ENCODE measurements at regions of chr20 and their contacts with region 1.

Region 1: GRCh38 chr20:45771182-45771759 is 20.4 kb downstream of the WFDC3 start:
- DNase-seq: peak; percentile 48
- ATAC-seq: peak; percentile 88
- H3K4me3 ChIP-seq: no peak overlapping the region
- H3K27ac ChIP-seq: no peak overlapping the region
- H3K4me1 ChIP-seq: no peaks in the 10 kb centered on the region; the same call in 1 of the 2 replicates
- H3K27me3 ChIP-seq: no peaks in the 10 kb centered on the region
- CTCF ChIP-seq: peak; percentile 83 to 97 (median 92); a peak in 5 of 6 replicates
- EP300 ChIP-seq: no peak
- POLR2A ChIP-seq: no peak
- RAD21 ChIP-seq: peak; percentile 99

Region 2: GRCh38 chr20:45362804-45363610 is 408.3 kb before region 1 on chr20 and contains the start of gene SYS1:
- CTCF ChIA-PET with region 1: interaction called, 16 read pairs
- POLR2A ChIA-PET with region 1: no interaction called
- RAD21 ChIA-PET with region 1: interaction called, 12 read pairs
- SMC1A ChIA-PET with region 1: interaction called, 18 read pairs
- in situ Hi-C with region 1: no loop called
- intact Hi-C with region 1: loop called (anchors 2 kb)
- DNase-seq: peak; percentile 94
- ATAC-seq: peak; percentile 85
- H3K4me3 ChIP-seq: peak within 1 kb of the TSS; percentile 62
- H3K27ac ChIP-seq: peak within 1 kb of the TSS; percentile 92
- H3K4me1 ChIP-seq: peaks cover 39% of the 10 kb centered on the region
- H3K27me3 ChIP-seq: no peaks in the 10 kb centered on the region
- CTCF ChIP-seq: peak; percentile 85 to 99 (median 87); a peak in 5 of 6 replicates
- EP300 ChIP-seq: 0 out of 4 replicates have a peak, but pooled peaks of 1 of the 2 experiments have one; percentile 30
- POLR2A ChIP-seq: peak; percentile 94
- RAD21 ChIP-seq: peak; percentile 91
- polyA plus RNA-seq, gene SYS1: 5.1 to 7.3 TPM

Region 3: GRCh38 chr20:45450097-45450818 is 321.0 kb before region 1 on chr20:
- CTCF ChIA-PET with region 1: interaction called, 47 read pairs
- POLR2A ChIA-PET with region 1: no interaction called
- RAD21 ChIA-PET with region 1: interaction called, 10 read pairs
- SMC1A ChIA-PET with region 1: interaction called, 12 read pairs
- in situ Hi-C with region 1: loop called (anchors 5 kb)
- intact Hi-C with region 1: no loop called
- DNase-seq: no peak
- ATAC-seq: peak; percentile 74
- H3K4me3 ChIP-seq: no peak overlapping the region
- H3K27ac ChIP-seq: no peak overlapping the region
- H3K4me1 ChIP-seq: no peaks in the 10 kb centered on the region
- H3K27me3 ChIP-seq: no peaks in the 10 kb centered on the region; a peak in 3 of 4 replicates
- CTCF ChIP-seq: peak; percentile 46 to 61 (median 60)
- EP300 ChIP-seq: no peak
- POLR2A ChIP-seq: no peak
- RAD21 ChIP-seq: peak; percentile 58

Region 4: DNA sequence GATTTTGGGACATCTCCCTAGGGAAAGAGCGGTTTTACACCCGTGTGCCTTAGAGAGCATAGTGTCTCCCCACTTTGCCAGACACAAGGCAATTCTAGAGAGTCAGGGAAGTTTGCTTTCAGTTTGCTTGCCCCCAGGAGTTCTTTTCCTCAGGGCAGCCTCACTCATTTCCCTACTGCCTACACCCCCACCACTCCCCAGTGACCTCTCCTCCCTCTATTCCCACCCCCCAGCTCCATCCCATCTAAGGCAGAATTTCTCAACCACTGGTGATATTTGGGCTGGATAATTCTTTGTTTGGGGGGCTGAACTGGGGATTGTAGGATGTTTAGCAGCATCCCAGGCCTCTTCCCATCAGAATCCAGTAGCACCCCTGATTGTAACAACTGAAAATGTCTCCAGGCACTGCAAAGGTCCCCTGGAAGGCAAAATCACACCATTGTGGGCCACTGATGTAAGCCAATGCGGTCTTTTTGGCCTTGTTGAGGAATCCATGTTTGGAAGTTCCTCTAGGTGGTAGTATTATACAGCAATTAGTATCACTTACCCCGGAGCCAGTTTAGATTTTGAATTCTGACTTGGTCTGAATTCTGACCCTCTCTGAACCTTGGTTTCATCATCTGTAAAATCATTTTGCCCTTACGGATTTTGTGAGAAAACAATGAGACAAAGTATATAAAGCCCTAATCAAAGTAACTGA is 225.4 kb before region 1 on chr20:
- CTCF ChIA-PET with region 1: interaction called, 3 read pairs
- POLR2A ChIA-PET with region 1: no interaction called
- RAD21 ChIA-PET with region 1: no interaction called
- SMC1A ChIA-PET with region 1: no interaction called
- in situ Hi-C with region 1: no loop called
- intact Hi-C with region 1: loop called (anchors 1 kb)
- DNase-seq: no peak
- ATAC-seq: 0 out of 3 replicates have a peak, but pooled peaks have one; percentile 26
- H3K4me3 ChIP-seq: no peak overlapping the region
- H3K27ac ChIP-seq: no peak overlapping the region
- H3K4me1 ChIP-seq: no peaks in the 10 kb centered on the region
- H3K27me3 ChIP-seq: no peaks in the 10 kb centered on the region; a peak in 2 of 4 replicates
- CTCF ChIP-seq: peak in 2 of 3 experiments; percentile 11 to 32; a peak in 2 of 6 replicates
- EP300 ChIP-seq: no peak
- POLR2A ChIP-seq: no peak
- RAD21 ChIP-seq: peak; percentile 48

Region 5: GRCh38 chr20:45751721-45752120 is 19.6 kb before region 1 on chr20:
- CTCF ChIA-PET with region 1: interaction called, 11 read pairs
- POLR2A ChIA-PET with region 1: no interaction called
- RAD21 ChIA-PET with region 1: interaction called, 3 read pairs
- SMC1A ChIA-PET with region 1: interaction called, 3 read pairs
- in situ Hi-C with region 1: no loop called
- intact Hi-C with region 1: no loop called
- DNase-seq: no peak
- ATAC-seq: no peak
- H3K4me3 ChIP-seq: no peak overlapping the region
- H3K27ac ChIP-seq: no peak overlapping the region
- H3K4me1 ChIP-seq: no peaks in the 10 kb centered on the region
- H3K27me3 ChIP-seq: no peaks in the 10 kb centered on the region; a peak in 1 of 4 replicates
- CTCF ChIP-seq: no peak
- EP300 ChIP-seq: no peak
- POLR2A ChIP-seq: no peak
- RAD21 ChIP-seq: no peak

Measured in GM12878 (cell line).